GM13977 (cell line): ENCODE measurements at regions of chr4 and their contacts with region 1.

Region 1: DNA sequence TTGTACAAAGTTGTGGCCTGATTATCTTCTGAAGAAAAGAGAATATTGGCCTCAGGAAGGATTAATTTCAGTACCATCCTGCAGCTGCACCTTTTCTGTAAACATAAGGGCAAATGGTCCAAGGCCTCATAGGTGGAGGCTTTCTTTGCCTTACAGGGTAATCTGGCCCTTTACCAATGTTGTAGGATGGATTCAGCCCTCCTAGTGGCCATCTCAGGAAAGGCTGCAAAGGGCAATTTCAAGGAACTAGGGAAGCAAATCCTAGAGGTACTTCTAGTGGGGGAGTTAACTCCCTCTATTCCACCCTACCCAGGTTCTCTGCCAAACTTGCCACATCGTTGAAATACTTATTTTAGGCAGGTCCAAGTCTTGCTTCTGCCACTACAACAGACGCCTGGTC is 57.6 kb downstream of the UGT2B11 start:
- DNase-seq: no peak
- CTCF ChIP-seq: peak; percentile 8

Region 2: DNA sequence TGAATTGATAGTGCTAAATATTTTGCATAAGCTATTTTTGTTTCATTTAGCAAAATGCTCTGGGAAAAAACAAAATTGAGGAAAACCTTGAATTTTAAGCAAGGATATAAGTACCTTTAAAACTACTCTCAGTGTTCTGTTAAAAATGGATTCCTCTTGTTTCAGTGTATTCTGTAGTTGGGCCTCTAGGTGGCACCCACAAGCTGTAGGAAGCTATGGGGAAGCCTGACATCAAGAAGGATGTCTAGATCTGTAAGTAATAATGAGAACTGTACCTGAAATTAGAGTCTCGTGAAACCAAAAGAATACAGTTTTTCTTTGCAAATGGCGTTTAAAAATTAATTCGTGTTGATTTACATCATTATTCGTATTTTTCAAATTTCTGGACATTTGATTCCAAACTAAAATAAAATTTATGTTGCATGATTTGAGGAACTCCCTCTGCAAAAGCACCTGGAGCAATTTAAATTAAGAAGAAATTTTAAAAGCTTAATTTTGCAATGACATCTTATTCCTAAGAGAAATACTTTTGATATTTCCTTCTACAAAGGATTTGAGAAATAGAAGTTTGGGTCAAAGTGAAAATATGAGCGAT is 658.4 kb before region 1 on chr4:
- in situ Hi-C with region 1: loop called (anchors 25 kb)
- DNase-seq: peak; percentile 49
- CTCF ChIP-seq: peak; percentile 85

Region 3: DNA sequence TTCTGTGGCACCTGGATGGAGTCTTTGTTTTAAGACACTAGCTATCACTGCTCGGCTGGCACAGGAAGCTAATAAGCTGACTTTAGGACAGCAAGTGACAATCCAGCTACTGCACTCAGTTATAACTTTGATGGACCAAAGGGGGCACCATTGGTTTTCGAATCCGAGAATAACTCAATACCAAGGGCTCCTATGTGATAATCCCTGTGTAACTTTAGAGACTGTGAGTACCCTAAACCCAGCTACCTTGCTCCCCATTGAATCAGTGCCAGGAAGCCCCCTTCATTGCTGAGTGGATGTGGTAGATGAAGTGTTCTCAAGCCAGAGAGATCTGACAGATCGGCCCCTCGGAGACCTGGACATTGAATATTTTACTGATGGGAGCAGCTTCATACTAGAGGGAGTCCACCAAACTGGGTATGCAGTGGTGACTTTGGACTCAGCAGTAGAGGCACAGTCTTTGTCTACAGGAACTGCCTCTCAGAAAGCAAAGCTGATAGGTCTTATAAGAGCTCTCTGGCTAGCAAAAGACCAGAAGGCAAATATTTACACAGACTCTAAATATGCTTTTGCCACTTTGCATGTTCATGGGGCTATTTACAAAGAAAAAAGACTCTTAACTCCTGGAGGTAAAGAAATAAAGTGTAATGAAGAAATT is 96.1 kb before region 1 on chr4:
- in situ Hi-C with region 1: no loop called
- DNase-seq: no peak
- CTCF ChIP-seq: no peak